HCT116 (cell line): ENCODE measurements at regions of chr15 and their contacts with region 1.

Region 1: GRCh38 chr15:65275728-65276126 is 11.0 kb downstream of the PARP16 start:
- DNase-seq: no peak
- ATAC-seq: peak; percentile 53
- H3K4me3 ChIP-seq: peak overlapping the region in 1 of 2 experiments; percentile 8; a peak in 1 of 4 replicates
- H3K27ac ChIP-seq: peak overlapping the region; percentile 2; the same call in 1 of the 2 replicates
- H3K4me1 ChIP-seq: peaks cover 7 to 19% of the 10 kb centered on the region in 2 experiments
- H3K27me3 ChIP-seq: no peaks in the 10 kb centered on the region
- CTCF ChIP-seq: no peak
- POLR2A ChIP-seq: no peak
- RAD21 ChIP-seq: no peak

Region 2: GRCh38 chr15:64961013-64961412 is 314.7 kb before region 1 on chr15:
- CTCF ChIA-PET with region 1: no interaction called
- POLR2A ChIA-PET with region 1: no interaction called
- RAD21 ChIA-PET with region 1: no interaction called
- intact Hi-C with region 1: no loop called
- DNase-seq: no peak
- ATAC-seq: 0 out of 2 replicates have a peak, but pooled peaks have one; percentile 44
- H3K4me3 ChIP-seq: no peak overlapping the region
- H3K27ac ChIP-seq: no peak overlapping the region
- H3K4me1 ChIP-seq: no peaks in the 10 kb centered on the region
- H3K27me3 ChIP-seq: no peaks in the 10 kb centered on the region
- CTCF ChIP-seq: no peak
- POLR2A ChIP-seq: no peak
- RAD21 ChIP-seq: no peak

Region 3: DNA sequence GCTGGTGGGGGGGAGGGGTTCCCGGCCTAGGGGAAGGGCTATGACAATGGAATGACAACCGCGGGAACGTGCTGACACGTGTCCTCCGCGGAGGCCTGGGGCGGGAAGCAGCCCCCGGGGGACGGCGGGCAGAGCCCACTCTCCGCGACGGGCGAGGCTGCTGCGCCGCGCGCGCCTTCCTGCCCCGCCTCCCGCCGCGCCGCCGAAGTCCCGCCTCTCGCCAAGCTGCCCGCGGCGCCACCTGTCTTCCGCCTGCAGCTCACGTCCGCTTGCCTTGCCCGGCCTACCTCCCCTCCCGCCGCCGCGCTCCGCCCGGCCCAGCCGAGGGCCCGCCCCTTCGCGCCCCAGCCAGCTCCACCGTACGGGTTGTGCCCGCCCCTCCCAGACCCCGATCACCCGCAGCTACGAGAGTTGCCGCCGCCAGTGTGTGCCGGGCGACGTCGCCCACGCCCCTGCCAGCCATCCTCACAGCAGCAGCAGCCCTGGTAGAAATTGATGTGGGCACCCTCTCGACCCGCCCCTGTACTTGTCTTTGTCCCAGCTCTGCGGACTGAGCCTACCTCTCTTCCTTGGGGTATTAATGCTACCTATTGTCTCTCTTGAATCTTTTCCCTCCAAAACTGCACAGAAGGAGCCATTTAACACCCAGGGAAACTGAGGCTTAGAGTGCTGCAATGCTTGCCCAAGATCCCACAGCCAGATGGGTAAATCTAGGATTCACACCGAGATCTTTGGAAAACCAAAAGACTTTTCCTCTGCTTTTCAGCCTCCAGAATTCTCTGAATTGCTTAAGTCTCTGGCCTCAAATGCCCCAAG is 11.2 kb after region 1 on chr15 and contains the start of gene PARP16:
- CTCF ChIA-PET with region 1: interaction called, 4 read pairs
- POLR2A ChIA-PET with region 1: interaction called, 10 read pairs
- RAD21 ChIA-PET with region 1: no interaction called
- intact Hi-C with region 1: no loop called
- DNase-seq: peak; percentile 73
- ATAC-seq: peak; percentile 96
- H3K4me3 ChIP-seq: peak within 1 kb of the TSS; percentile 64 to 87
- H3K27ac ChIP-seq: peak within 1 kb of the TSS; percentile 73
- H3K4me1 ChIP-seq: peaks cover 11 to 20% of the 10 kb centered on the region in 2 experiments
- H3K27me3 ChIP-seq: no peaks in the 10 kb centered on the region
- CTCF ChIP-seq: peak in 1 of 3 experiments; percentile 35; a peak in 3 of 6 replicates
- POLR2A ChIP-seq: peak; percentile 16
- RAD21 ChIP-seq: no peak
- total RNA-seq, gene PARP16: 9.7 TPM

Region 4: GRCh38 chr15:65310431-65311137 is 34.9 kb after region 1 on chr15:
- CTCF ChIA-PET with region 1: no interaction called
- POLR2A ChIA-PET with region 1: no interaction called
- RAD21 ChIA-PET with region 1: no interaction called
- intact Hi-C with region 1: no loop called
- DNase-seq: no peak
- ATAC-seq: no peak
- H3K4me3 ChIP-seq: no peak overlapping the region
- H3K27ac ChIP-seq: no peak overlapping the region
- H3K4me1 ChIP-seq: peaks cover 8 to 10% of the 10 kb centered on the region in 2 experiments
- H3K27me3 ChIP-seq: no peaks in the 10 kb centered on the region
- CTCF ChIP-seq: no peak
- POLR2A ChIP-seq: no peak
- RAD21 ChIP-seq: no peak